HEK293 (cell line): ENCODE measurements at regions of chr11 and their contacts with region 1.

Region 1: GRCh38 chr11:47552566-47553416 is at the start of gene CELF1:
- H3K4me3 ChIP-seq: peak within 1 kb of the TSS; percentile 99
- H3K27ac ChIP-seq: peak within 1 kb of the TSS; percentile 79
- H3K4me1 ChIP-seq: no peaks in the 10 kb centered on the region
- CTCF ChIP-seq: no peak

Region 2: DNA sequence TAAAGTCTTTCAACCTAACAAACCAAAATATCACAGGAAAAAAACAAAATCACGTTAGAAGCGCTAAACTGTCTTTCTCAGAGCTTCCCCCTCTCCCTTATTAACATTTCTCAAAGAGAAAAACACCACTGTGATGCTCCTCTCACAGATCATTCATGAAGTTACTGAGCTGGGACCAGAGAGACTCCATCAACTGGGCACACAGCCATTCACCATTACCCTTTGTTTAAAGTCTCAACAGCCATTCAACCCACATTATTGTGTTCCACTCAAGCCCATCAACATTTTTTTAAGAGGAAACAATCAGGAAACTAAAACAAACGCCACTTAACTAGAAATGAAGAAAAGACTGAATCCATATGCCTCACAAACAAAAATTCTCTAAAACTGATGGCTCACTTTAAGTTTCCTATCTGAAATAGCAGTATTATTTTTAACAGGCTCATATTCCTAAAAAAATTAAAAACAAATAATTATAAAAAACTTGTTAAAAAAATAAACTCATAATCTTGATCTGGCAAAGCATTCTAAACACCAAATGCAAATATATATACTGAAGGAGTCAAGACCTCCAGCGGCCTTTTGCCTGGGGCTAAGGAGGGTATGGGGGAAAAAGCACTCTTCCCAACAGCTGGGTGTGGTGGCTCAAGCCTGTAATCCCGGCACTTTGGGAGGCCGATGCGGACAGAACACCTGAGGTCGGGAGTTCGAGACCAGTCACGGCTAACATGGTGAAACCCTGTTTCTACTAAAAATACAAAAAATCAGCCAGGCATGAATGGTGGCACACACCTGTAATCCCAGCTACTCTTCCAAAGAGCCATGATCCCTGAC is 13.8 kb before region 1 on chr11:
- CTCF ChIA-PET with region 1: interaction called, 12 read pairs
- POLR2A ChIA-PET with region 1: interaction called, 6 read pairs
- H3K4me3 ChIP-seq: no peak overlapping the region
- H3K27ac ChIP-seq: no peak overlapping the region
- H3K4me1 ChIP-seq: peaks cover 17% of the 10 kb centered on the region
- CTCF ChIP-seq: no peak

Region 3: GRCh38 chr11:47565340-47566148 is 12.8 kb after region 1 on chr11 and contains the start of gene PTPMT1:
- CTCF ChIA-PET with region 1: interaction called, 16 read pairs
- POLR2A ChIA-PET with region 1: interaction called, 14 read pairs
- H3K4me3 ChIP-seq: peak within 1 kb of the TSS; percentile 80
- H3K27ac ChIP-seq: peak within 1 kb of the TSS; percentile 93
- H3K4me1 ChIP-seq: no peaks in the 10 kb centered on the region
- CTCF ChIP-seq: no peak

Region 4: DNA sequence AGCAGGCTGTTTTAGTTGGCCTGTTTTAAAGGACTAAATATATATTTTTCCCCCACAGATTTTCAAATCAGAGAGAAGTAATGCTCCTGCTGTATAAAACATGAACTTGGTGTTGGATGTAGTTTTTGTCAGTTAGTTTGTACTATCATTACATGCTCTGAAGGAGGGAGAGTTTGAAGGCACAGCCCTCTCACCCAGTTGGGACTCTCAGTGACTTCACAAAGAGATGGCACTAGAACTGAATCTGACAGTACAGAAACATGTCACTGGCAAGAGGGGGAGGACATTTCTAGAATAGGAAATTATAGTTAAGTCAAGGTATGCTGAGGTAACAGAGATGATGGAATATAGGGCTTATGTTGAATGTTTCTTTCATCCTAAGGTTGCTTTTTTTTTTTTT is 62.5 kb after region 1 on chr11:
- CTCF ChIA-PET with region 1: no interaction called
- POLR2A ChIA-PET with region 1: no interaction called
- H3K4me3 ChIP-seq: no peak overlapping the region
- H3K27ac ChIP-seq: no peak overlapping the region
- H3K4me1 ChIP-seq: no peaks in the 10 kb centered on the region
- CTCF ChIP-seq: no peak

Region 5: GRCh38 chr11:47631473-47631872 is 78.7 kb after region 1 on chr11:
- CTCF ChIA-PET with region 1: no interaction called
- POLR2A ChIA-PET with region 1: no interaction called
- H3K4me3 ChIP-seq: no peak overlapping the region
- H3K27ac ChIP-seq: no peak overlapping the region
- H3K4me1 ChIP-seq: no peaks in the 10 kb centered on the region
- CTCF ChIP-seq: no peak